ENCODE measurements at regions of chr6 and their contacts with region 1.

Region 1: GRCh38 chr6:83514866-83515466 is 2.6 kb downstream of the PRSS35 start:
- DNase-seq: peak; percentile 65

Region 2: DNA sequence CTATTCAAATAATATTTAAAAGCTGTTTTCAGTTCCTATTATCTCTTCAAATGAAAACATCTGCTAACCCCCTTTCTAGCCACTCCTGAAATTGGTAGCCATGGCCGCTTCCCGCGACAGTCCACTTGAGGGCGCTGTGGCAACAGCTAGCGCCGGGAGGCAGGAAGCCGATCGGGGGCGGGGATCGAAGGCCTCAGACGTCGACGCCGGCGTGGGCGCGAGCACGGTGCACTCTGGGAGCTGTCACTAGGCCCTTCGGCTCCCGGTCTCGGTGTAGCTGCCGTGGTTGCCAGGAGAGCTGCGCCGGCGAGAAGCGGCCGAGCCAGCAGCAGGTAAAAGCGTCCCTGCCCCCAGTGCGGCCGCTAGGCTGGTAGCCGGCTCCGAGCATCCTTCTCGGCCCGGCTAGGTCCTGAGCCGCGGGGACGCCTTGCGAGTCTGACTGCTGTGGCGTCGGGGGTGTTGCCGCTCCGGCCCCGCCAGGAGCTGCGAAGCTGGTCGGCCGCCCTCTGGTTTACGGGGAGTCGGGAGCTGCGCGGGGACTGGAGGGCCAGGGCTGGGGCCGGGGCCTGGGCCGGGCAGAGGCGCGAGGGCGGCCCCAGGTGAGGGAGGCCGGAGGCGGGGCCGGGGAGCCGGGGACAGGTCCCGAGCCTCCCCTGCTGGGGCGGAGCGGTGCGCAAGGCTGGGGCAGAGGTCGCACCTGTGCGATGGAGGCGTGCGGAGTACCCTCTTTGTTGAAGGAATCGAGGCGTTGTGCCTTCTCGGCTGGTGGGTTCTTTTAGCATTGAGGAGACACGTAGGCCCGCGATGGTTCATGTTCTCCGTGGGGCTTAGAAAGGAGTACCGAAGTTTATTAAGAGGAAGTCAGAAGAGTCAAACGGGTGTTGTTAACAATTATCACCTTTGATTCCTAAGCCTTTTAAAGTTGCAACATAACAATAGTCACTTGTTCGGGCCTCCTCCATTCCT is 447.2 kb before region 1 on chr6 and contains the start of gene DOP1A:
- in situ Hi-C with region 1: loop called (anchors 25 kb)
- DNase-seq: peak; percentile 94
- total RNA-seq, gene DOP1A: 2.6 and 8.2 TPM in 2 replicates

Region 3: DNA sequence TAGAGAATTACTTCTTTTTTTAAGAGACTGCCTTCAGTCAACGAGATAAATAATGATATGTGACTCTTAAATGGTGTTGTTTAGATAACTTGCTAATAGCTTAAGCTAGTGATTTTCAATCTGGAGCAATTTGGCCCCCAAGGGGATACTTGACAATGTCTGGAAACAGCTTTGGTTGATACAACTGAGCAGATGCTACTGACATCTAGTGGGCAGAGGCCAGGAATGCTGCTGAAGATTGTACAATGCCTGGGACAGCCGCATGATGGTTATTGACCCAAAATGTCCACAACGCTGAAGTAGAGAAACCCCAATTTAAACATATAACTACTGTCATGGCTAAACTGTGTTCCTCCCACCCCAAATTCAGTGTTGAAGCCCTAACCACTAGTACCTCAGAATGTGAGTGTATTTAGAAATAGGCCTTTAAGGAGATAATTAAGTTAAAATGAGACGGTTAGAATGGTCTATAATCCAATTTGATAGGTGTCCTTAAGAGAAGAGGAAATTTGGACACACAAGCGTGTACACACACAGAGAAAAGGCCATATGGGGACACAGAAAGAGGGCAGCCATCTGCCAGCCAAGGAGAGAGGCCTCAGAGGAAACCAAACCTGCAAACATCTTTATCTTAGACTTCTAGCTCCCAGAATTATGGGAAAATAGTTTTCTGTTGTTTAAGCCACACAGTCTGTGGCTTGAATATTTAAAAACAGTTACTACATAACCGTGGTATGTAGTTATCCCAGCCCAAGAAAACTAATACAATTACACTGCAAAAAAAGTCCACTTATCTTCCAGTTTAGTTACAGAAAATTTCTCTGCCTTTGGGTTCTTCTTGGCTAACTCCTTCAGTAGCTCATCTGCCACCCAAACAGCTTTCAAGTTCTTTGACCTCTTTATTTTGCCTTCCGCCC is 299.6 kb before region 1 on chr6:
- in situ Hi-C with region 1: loop called (anchors 25 kb)
- DNase-seq: peak; percentile 90

Region 4: GRCh38 chr6:83574787-83575186 is 59.8 kb after region 1 on chr6:
- in situ Hi-C with region 1: no loop called
- DNase-seq: peak; percentile 17

Measured in G401 (cell line).